Heart left ventricle (tissue), 16 donors: ENCODE measurements at regions of chr4 and their contacts with region 1.

Region 1: DNA sequence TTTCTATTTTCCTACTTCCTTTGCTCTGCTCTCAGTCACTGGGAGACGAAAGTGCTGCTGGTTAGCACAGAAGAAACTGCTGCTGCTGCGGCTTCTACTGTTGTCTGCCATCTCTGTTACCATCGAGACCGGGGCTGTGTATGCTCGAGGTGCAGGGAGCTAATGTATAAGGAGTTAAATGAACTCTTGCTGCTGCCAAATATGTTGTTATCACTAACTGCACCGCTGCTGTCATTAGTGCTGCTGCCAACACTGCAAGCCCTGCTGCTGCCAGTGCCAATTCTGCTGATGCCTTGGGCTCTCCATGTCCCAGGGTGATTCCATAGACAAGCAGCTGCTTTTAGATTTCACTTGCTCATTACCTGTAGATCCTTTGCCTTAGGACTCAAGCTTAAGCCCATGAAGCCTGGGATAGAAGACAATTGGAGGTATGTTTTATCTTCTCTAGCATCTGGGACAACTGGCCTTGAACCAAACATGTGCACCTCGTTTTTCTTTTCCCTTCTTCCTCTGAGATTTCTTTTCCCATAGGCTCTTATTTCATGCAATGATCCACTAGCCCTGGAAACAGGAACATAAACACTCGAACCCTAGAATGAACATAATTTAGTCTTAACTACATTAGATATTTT is 107.8 kb downstream of the CCSER1 start:
- DNase-seq: peak in 4 of 5 donors; percentile 51 to 78 (median 70)
- ATAC-seq: peak; percentile 97 to 99 (median 98)
- H3K4me3 ChIP-seq: peak overlapping the region in 8 of 12 donors; percentile 26 to 46 (median 34)
- H3K27ac ChIP-seq: peak overlapping the region in 9 of 12 donors; percentile 1 to 68 (median 49)
- H3K4me1 ChIP-seq: peaks cover 0 to 3% (median 0%) of the 10 kb centered on the region in 12 donors
- H3K27me3 ChIP-seq: no peaks in the 10 kb centered on the region
- CTCF ChIP-seq: no peak
- POLR2A ChIP-seq: no peak

Region 2: GRCh38 chr4:90127223-90127705 is 107.8 kb before region 1 on chr4 and contains the start of gene CCSER1:
- intact Hi-C with region 1: loop called in 1 of 10 experiments (anchors 5 kb)
- DNase-seq: peak; percentile 78 to 87 (median 81)
- ATAC-seq: peak; percentile 96 to 98 (median 98)
- H3K4me3 ChIP-seq: peak within 1 kb of the TSS; percentile 36 to 84 (median 71)
- H3K27ac ChIP-seq: peak within 1 kb of the TSS in 11 of 12 donors; percentile 61 to 84 (median 79)
- H3K4me1 ChIP-seq: peaks cover 0 to 21% (median 6%) of the 10 kb centered on the region in 12 donors
- H3K27me3 ChIP-seq: peaks cover 0 to 5% (median 0%) of the 10 kb centered on the region in 9 donors
- CTCF ChIP-seq: peak in 1 of 12 donors; percentile 12
- POLR2A ChIP-seq: peak; percentile 66 to 94
- total RNA-seq, gene CCSER1: 5.0 to 15.8 (median 13.3) TPM

Region 3: DNA sequence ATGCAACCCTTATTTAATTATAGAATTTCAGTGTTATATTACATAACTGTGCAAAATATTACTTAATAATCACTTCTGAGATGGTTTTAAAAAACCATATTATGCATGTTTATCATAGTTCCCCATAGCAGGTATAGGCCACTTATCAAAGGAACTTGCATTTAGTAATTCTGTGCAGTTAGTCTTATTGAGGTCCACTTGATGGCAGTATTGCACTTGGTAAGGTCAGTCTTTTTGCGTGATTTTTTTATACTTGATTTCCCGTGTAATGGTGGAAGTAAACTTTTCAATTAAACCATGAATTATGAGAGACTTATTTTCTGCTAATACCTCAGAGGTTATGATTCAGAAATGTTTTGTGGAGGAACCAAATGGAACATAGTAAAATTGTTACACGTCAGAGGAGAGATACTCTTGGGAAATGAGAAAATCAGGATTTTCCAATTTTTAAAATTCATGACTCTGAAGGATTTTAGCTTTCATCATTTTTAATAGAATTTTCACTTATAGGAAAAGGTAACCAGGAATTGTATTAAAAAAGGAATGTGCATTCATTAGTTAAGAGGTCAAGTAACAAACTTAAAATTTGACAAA is 122.2 kb after region 1 on chr4:
- intact Hi-C with region 1: no loop called
- DNase-seq: no peak
- ATAC-seq: peak in 1 of 4 donors; percentile 46
- H3K4me3 ChIP-seq: peak overlapping the region in 2 of 12 donors; percentile 6 to 9
- H3K27ac ChIP-seq: no peak overlapping the region
- H3K4me1 ChIP-seq: no peaks in the 10 kb centered on the region
- H3K27me3 ChIP-seq: no peaks in the 10 kb centered on the region
- CTCF ChIP-seq: peak; percentile 21 to 57 (median 42)
- POLR2A ChIP-seq: no peak